ENCODE measurements at regions of chr2 and their contacts with region 1.

Region 1: DNA sequence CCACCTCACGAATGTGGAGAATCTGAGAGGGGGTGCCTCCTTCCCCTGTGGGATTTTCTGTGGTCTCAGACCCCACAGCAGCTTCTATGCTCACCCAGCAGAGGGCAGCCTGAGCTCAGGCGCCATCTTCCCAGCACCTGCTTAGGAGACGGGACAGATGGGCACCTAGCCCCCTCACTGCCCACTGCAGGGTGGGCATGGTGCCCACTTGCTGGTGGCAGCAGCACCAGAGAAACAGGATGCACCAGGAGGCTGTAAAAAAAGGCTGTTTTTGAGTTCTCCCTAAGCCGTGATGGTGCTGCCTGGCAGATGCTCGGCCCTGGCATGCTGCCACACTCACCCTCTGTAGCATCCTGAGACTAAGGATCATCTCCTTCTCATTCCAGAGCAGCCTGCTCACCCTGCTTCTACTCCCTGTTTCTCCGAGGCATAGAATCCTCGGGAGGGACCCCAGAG is 19.1 kb upstream of the SLC20A1 start:
- DNase-seq: peak; percentile 72 to 88 (median 81)
- H3K4me3 ChIP-seq: peak overlapping the region; percentile 14 to 69 (median 52)
- H3K27ac ChIP-seq: peak overlapping the region in 56 of 59 donors; percentile 6 to 92 (median 73)
- H3K27me3 ChIP-seq: no peaks in the 10 kb centered on the region
- CTCF ChIP-seq: peak; percentile 74 to 98 (median 92)

Region 2: GRCh38 chr2:112692496-112692911 is 65.9 kb after region 1 on chr2:
- intact Hi-C with region 1: loop called (anchors 1 to 2 kb)
- DNase-seq: peak in 4 of 10 donors; percentile 26 to 61 (median 37)
- H3K4me3 ChIP-seq: no peak overlapping the region
- H3K27ac ChIP-seq: peak overlapping the region in 51 of 59 donors; percentile 2 to 85 (median 49)
- H3K27me3 ChIP-seq: no peaks in the 10 kb centered on the region
- CTCF ChIP-seq: no peak

Region 3: DNA sequence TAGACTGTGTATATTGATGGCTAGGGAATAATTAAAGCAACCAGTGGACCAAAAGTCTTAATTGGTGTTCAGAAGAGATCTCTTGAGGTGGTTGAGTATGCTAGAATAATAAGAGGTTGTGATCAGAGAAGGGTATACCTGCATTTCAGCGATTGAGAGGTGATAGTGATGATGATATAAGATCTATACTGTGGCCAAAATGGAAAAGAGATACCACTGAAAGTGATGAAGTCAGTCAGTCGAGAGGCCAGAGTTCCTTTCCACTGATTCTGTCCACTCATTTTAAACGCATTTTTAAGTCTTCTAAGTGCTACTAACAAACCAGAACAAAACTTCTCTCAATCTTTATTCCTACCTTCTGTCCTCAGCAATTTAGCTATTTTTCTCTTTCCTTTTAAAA is 1296.2 kb after region 1 on chr2:
- intact Hi-C with region 1: no loop called
- DNase-seq: no peak
- H3K4me3 ChIP-seq: no peak overlapping the region
- H3K27ac ChIP-seq: no peak overlapping the region
- H3K27me3 ChIP-seq: no peaks in the 10 kb centered on the region
- CTCF ChIP-seq: no peak

Measured in dorsolateral prefrontal cortex (tissue), 120 donors.